ENCODE measurements at regions of chr2 and their contacts with region 1.

Region 1: GRCh38 chr2:47070920-47071824 is 83.9 kb downstream of the STPG4 start:
- DNase-seq: peak; percentile 61 to 83
- ATAC-seq: peak in 1 of 2 donors; percentile 55
- H3K4me3 ChIP-seq: no peak overlapping the region
- H3K27ac ChIP-seq: peak overlapping the region; percentile 78 to 84 (median 79)
- H3K4me1 ChIP-seq: peaks cover 61 to 63% of the 10 kb centered on the region in 2 donors
- H3K27me3 ChIP-seq: no peaks in the 10 kb centered on the region
- CTCF ChIP-seq: no peak
- POLR2A ChIP-seq: peak in 1 of 2 donors; percentile 10

Region 2: GRCh38 chr2:46699934-46700256 is 371.3 kb before region 1 on chr2:
- in situ Hi-C with region 1: no loop called
- intact Hi-C with region 1: no loop called
- DNase-seq: no peak
- ATAC-seq: no peak
- H3K4me3 ChIP-seq: peak overlapping the region; percentile 62 to 86 (median 80)
- H3K27ac ChIP-seq: peak overlapping the region; percentile 90 to 95 (median 94)
- H3K4me1 ChIP-seq: peaks cover 39 to 42% of the 10 kb centered on the region in 2 donors
- H3K27me3 ChIP-seq: no peaks in the 10 kb centered on the region
- CTCF ChIP-seq: no peak
- POLR2A ChIP-seq: no peak

Region 3: DNA sequence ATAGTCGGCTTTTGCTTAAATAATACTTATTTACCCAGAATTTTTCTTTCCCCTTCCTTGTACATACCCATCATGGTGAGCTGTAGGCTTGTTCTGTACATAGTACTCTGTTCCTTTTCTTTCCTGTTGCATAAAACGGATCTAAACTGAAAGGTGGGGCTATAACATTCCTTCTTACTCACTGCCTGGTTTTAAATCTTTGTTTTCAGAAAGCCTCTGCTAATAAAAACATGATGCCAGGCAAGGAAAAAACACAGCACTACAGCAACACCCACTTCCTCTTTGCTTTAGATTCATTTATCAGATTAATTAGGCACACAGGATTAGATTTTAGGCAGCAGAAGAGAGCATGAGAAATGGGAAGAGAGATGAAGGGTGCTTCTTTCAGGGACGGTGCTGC is 1439.2 kb after region 1 on chr2:
- in situ Hi-C with region 1: no loop called
- intact Hi-C with region 1: loop called (anchors 10 kb)
- DNase-seq: no peak
- ATAC-seq: no peak
- H3K4me3 ChIP-seq: no peak overlapping the region
- H3K27ac ChIP-seq: peak overlapping the region in 1 of 4 donors; percentile 11
- H3K4me1 ChIP-seq: no peaks in the 10 kb centered on the region
- H3K27me3 ChIP-seq: no peaks in the 10 kb centered on the region
- CTCF ChIP-seq: no peak
- POLR2A ChIP-seq: no peak